Lower lobe of right lung (tissue), 2 donors: ENCODE measurements at regions of chr15 and their contacts with region 1.

Region 1: DNA sequence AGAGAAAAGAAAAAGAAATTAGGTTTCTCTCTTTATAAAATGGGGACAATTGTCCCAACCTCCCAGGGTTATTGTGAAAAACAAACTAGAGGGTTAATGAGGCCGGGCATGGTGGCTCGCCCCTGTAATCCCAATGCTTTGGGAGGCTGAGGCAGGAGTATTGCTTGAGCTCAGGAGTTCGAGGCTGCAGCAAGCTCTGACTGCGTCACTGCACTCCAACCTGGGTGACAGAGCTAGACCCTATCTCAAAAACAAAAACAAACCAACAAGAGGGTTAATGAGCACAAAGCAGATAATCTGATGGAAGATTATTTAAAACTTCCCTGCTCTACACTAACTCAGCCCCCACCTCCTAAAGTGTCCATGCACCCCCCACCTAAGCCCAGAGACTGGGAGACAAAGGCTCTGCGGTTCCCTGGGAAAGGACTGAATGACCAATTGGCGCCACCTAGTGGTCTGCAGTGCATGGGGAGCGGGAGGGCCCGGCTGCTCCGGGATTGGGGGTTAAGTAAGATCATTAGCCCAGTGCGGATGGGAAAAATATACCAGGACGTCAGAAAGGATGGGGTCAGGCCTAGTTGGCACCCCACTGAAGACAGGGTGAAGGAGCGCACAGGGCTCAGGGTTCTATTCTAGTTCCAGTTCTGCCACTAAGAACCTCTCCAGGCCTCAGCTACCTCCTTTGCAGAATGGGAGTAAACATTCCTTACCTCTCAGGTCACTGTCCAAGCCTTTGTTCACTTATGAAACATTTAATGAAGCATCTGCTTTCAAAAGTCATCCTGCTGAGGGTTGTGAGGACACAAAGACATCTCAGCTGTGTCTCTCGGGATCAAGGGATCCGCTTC is 15.6 kb downstream of the PIF1 start:
- DNase-seq: peak; percentile 79
- ATAC-seq: peak; percentile 84 to 91
- H3K4me3 ChIP-seq: no peak overlapping the region
- H3K27ac ChIP-seq: no peak overlapping the region
- H3K4me1 ChIP-seq: no peaks in the 10 kb centered on the region
- H3K27me3 ChIP-seq: no peaks in the 10 kb centered on the region
- CTCF ChIP-seq: peak; percentile 96

Region 2: GRCh38 chr15:64720188-64720587 is 89.7 kb before region 1 on chr15:
- intact Hi-C with region 1: loop called (anchors 10 kb)
- DNase-seq: no peak
- ATAC-seq: no peak
- H3K4me3 ChIP-seq: no peak overlapping the region
- H3K27ac ChIP-seq: no peak overlapping the region
- H3K4me1 ChIP-seq: peaks cover 6% of the 10 kb centered on the region
- H3K27me3 ChIP-seq: no peaks in the 10 kb centered on the region
- CTCF ChIP-seq: no peak

Region 3: DNA sequence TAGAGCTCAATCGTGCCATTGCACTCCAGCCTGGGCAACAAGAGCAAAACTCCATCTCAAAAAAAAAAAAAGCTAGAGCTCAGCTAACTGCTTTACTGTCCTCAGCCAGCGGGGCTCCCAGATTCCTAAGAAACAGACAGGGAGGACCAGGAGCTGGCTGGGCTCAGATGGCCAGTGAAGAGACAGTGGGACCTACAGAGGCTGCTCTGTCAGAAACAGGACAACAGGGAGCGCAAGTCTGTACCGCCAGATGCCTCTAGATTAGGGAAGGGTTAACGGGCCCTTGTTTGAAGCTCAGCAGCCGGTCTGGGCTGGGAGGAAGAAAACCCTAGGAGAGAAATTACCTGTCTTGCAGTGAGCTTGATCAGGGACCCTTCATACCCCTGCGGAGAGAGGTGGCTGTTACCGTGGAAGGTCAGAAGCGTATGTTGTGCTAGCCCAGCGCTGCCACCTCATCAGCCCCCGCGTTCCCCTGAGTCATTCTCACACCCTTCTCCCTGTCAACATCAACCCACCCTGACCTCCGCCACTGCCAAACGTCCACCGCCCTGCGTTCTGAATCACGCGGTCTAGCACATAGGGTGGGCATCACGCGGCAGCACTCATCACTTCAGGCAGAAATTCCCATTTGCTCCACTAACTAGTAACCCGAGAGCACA is 59.7 kb before region 1 on chr15:
- intact Hi-C with region 1: loop called (anchors 10 kb)
- DNase-seq: no peak
- ATAC-seq: no peak
- H3K4me3 ChIP-seq: no peak overlapping the region
- H3K27ac ChIP-seq: no peak overlapping the region
- H3K4me1 ChIP-seq: no peaks in the 10 kb centered on the region
- H3K27me3 ChIP-seq: no peaks in the 10 kb centered on the region
- CTCF ChIP-seq: no peak